K562 (cell line): ENCODE measurements at regions of chr1 and their contacts with region 1.

Region 1: DNA sequence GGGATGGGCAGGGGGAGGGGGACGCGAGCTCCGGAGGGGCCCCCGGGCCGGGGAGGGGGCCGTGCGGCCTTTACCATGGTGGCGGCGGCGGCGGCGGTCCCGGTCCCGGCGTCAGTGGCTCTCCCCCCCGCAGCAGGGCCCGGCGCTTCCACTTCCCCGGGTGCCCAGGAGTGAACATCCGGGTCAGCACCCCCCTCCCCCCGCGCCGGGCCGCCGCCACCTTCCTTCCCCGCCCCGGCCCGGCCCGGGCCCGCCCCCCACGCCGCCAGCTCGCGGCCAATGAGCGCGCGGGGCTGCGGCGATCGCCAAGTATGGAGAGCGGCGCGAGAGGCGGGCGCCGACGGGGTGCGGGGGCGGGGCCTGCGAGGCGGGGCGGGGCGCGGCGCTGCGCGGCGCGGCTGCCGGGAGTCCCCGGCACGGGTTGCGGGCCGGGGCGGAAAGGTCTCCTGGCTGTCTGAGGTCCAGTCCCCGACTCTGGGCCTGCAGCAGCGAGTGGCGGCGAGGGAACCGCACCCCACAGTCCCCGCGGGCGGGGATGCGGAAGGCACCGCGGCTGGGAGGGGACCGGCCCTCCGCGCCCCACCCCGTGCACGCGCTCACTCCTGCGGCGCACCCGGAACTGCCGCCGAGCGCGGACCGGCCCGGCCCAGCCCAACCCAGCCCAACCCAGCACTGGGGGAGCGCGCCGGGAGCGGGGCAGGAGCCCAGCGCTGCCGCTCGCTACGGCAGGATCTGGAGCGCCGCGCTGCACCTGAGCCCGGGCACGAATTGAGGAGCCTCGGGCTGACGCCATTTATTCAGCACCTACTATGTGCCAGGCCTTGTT is at the start of gene CAPZB:
- DNase-seq: peak; percentile 96 to 99 (median 98)
- ATAC-seq: peak; percentile 92
- H3K4me3 ChIP-seq: peak within 1 kb of the TSS; percentile 92
- H3K27ac ChIP-seq: peak within 1 kb of the TSS; percentile 97
- H3K4me1 ChIP-seq: peaks cover 34 to 38% of the 10 kb centered on the region in 2 experiments
- H3K27me3 ChIP-seq: no peaks in the 10 kb centered on the region
- CTCF ChIP-seq: 0 out of 6 replicates have a peak, but pooled peaks of 1 of the 3 experiments have one; percentile 7
- EP300 ChIP-seq: no peak
- POLR2A ChIP-seq: peak; percentile 87
- RAD21 ChIP-seq: peak in 1 of 2 experiments; percentile 15; a peak in 2 of 4 replicates
- polyA plus RNA-seq, gene CAPZB: 70.0 to 115 TPM

Region 2: DNA sequence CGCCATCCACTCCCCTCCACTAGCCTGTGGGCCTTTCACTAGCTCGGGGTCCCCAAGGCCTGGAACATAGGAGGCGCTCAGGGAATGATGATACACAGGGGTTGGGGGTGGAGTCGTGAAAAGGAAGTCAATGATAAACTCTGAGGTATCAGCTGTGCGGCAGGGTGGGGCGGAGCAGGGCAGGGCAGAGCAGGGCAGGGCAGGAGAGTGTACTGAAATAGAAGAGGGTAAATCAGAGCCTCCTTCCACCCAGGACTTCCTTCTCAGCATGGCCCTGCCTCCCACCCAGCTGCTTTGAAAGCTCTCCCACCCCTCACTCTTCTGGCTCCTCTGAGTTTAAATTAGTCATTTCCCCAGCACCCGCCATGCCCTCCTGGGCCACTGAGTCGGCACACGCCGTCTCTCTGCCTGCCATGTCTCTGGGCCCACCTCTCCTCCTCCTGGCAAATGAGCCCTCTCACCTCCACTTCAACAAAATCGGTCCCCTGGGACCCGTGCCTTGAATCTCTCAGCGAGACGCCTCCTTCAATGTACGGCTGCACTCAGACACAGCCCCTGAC is 17.1 kb before region 1 on chr1:
- CTCF ChIA-PET with region 1: interaction called, 3 read pairs
- POLR2A ChIA-PET with region 1: interaction called, 34 read pairs
- in situ Hi-C with region 1: no loop called
- intact Hi-C with region 1: no loop called
- DNase-seq: peak; percentile 70 to 87 (median 76)
- ATAC-seq: peak; percentile 90
- H3K4me3 ChIP-seq: no peak overlapping the region; the same call in 1 of the 2 replicates
- H3K27ac ChIP-seq: peak overlapping the region; percentile 75
- H3K4me1 ChIP-seq: peaks cover 17 to 45% of the 10 kb centered on the region in 2 experiments
- H3K27me3 ChIP-seq: no peaks in the 10 kb centered on the region
- CTCF ChIP-seq: peak in 2 of 3 experiments; percentile 41 to 49; a peak in 4 of 6 replicates
- EP300 ChIP-seq: peak; percentile 10; the same call in 1 of the 2 replicates
- POLR2A ChIP-seq: no peak
- RAD21 ChIP-seq: peak; percentile 42 to 58

Region 3: GRCh38 chr1:19504796-19505692 is 19.5 kb after region 1 on chr1:
- CTCF ChIA-PET with region 1: no interaction called
- POLR2A ChIA-PET with region 1: interaction called, 17 read pairs
- in situ Hi-C with region 1: no loop called
- intact Hi-C with region 1: no loop called
- DNase-seq: no peak
- ATAC-seq: no peak
- H3K4me3 ChIP-seq: no peak overlapping the region
- H3K27ac ChIP-seq: no peak overlapping the region
- H3K4me1 ChIP-seq: peaks cover 4 to 33% of the 10 kb centered on the region in 2 experiments; a peak in 4 of 5 replicates
- H3K27me3 ChIP-seq: no peaks in the 10 kb centered on the region
- CTCF ChIP-seq: no peak
- EP300 ChIP-seq: no peak
- POLR2A ChIP-seq: no peak
- RAD21 ChIP-seq: no peak

Region 4: DNA sequence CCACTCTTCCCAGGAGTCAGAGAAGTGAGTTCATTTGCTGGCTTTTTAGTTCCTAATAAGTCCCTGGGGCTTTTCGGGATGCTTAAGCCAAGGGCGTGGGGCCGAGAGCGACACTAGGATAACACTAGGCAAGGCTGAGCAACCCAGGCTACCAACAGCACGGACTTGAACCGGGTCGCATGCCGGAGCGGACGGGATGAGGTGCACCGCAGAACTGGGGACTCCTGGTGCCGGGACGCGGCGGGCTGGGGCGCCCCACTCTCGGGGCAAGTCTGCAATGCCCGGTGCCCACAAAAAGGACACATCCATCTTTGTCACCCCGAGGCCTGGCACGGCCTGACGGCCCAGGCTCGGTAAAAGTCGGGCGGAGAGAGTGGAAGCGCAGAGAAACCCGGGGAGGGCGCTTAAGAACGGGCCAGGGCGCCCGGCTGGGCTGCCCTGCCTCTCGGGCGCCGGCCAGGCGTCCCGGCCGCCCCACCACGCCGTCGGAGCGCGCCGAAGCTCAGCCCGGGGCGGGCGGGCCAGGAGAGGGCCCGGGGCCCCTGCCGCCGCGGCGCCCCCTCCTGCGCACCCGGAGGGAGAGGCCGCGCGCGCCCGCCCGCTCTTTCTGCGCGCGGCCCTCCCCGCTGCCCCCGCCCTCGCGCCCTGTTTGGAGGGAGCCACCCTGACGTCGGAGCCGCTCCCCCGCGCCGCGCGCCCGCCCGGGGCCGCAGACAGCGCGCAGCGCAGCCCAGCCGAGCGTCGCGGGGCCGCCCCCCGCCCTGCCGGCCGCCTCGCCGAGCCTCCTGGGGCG is 158.2 kb after region 1 on chr1 and contains the start of gene NBL1:
- CTCF ChIA-PET with region 1: no interaction called
- POLR2A ChIA-PET with region 1: interaction called, 3 read pairs
- in situ Hi-C with region 1: no loop called
- intact Hi-C with region 1: loop called (anchors 5 kb)
- DNase-seq: peak; percentile 69 to 93 (median 83)
- ATAC-seq: peak; percentile 62
- H3K4me3 ChIP-seq: peak within 1 kb of the TSS; percentile 34
- H3K27ac ChIP-seq: no peak within 1 kb of the TSS
- H3K4me1 ChIP-seq: peaks cover 0 to 36% of the 10 kb centered on the region in 2 experiments; a peak in 4 of 5 replicates
- H3K27me3 ChIP-seq: peaks cover 16 to 39% of the 10 kb centered on the region in 2 experiments; a peak in 4 of 5 replicates
- CTCF ChIP-seq: no peak
- EP300 ChIP-seq: no peak
- POLR2A ChIP-seq: no peak
- RAD21 ChIP-seq: no peak
- polyA plus RNA-seq, gene NBL1: 0.10 TPM in 1 of 2 experiments, not detected in the other